AG04450 (cell line): ENCODE measurements at regions of chr19 and their contacts with region 1.

Region 1: DNA sequence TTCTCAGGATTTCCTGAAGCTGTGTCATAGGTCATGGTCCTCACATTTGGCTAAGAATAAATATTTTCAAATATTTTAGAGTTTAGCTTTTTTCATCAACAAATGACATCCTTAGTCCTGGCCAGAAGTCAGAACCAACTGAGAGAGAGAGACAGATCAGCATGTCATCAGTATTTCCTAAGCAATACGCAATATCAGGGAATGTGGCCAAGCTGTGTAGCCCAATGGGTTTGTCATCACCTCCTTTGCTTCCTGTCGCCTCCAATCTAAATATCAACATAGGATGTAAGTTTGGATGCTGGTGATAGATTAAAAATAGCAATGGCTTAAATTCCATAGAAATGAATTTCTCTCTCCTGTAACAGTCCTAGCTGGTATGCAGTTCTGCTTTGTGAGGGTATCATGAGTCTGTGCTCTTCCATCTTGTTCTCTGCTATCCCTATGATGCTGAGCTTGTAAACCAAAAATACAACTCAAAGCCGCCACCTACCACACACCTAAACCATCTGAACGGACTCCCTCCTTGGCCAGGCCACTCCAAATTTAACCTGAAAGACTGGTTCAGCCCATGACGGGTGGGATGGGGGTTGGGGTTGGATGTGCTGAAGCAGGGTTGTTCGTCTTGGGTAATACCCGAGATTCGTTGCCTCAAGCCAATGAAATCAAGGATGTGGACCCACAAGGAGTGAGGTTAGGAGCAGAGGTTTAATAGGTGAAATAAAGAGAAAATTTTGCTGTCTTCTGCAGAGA is 10.0 kb upstream of the IGSF23 start:
- DNase-seq: peak; percentile 93
- H3K4me3 ChIP-seq: no peak overlapping the region
- H3K27ac ChIP-seq: peak overlapping the region; percentile 80
- H3K27me3 ChIP-seq: no peaks in the 10 kb centered on the region
- CTCF ChIP-seq: no peak

Region 2: DNA sequence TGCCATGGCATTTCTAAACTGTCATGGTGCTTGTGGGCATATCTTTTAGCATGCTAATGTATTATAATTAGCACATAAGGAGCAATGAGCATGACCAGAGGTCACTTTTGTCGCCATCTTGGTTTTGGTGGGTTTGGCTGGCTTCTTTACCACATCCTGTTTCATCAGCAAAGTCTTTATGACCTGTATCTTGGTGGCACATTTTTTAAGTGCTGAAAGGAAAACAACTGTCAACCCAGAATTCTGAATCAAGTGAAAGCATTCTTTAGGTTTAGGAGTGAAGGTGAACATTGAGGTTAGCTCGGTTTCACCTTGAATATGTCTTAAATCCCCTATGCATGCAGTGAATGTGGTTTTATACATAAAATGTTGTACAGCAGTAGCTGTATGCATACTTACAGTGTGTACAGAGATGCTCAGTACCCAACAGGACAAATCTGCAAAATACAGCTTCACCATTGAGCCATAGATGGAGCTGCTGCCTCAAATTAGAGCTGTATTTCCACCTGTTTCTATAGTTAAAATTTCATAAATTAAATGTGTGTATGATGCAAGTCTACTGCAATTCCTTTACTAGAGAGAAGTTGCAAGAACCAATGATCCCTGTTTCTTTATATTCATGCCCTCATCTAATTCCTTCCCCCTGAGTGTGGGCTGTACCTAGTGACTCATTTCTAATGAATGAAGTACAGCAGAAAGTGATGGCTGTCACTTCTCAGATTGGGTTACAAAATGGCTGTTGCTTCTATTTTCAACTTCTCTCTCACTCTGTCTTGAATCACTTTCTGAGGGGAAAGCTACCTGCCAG is 15.2 kb before region 1 on chr19:
- CTCF ChIA-PET with region 1: interaction called, 6 read pairs
- POLR2A ChIA-PET with region 1: interaction called, 18 read pairs
- DNase-seq: peak; percentile 86
- H3K4me3 ChIP-seq: no peak overlapping the region
- H3K27ac ChIP-seq: peak overlapping the region; percentile 91
- H3K27me3 ChIP-seq: no peaks in the 10 kb centered on the region
- CTCF ChIP-seq: peak; percentile 60

Region 3: DNA sequence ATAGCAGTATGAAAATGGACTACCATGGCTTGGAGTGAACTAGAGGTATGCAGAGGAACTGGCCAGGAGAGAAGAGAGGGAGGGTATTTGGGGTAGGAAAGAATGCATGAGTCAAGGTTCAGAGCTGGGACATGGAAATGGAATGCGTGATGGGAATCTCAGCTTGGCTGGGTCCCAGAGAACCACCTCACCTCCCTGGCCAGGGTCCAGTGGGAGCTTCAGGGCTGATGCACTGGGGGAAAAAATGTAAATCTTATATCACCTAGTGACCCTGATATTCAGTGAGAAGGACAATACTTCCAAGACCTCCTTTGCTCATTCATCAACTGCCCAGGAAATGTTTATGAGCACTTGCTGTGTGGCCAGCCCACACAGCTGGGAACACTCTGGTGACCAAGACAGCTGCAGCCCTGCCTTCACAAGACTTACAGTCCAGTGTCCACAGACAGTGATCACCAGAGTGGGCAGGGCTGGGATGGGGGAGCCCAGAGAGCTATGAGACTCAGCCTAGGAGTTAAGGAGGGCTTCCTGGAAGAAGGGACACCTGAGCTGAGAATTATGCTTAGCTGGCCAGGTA is 22.8 kb after region 1 on chr19:
- CTCF ChIA-PET with region 1: no interaction called
- POLR2A ChIA-PET with region 1: interaction called, 28 read pairs
- DNase-seq: peak; percentile 97
- H3K4me3 ChIP-seq: no peak overlapping the region
- H3K27ac ChIP-seq: peak overlapping the region; percentile 92
- H3K27me3 ChIP-seq: no peaks in the 10 kb centered on the region
- CTCF ChIP-seq: no peak

Region 4: DNA sequence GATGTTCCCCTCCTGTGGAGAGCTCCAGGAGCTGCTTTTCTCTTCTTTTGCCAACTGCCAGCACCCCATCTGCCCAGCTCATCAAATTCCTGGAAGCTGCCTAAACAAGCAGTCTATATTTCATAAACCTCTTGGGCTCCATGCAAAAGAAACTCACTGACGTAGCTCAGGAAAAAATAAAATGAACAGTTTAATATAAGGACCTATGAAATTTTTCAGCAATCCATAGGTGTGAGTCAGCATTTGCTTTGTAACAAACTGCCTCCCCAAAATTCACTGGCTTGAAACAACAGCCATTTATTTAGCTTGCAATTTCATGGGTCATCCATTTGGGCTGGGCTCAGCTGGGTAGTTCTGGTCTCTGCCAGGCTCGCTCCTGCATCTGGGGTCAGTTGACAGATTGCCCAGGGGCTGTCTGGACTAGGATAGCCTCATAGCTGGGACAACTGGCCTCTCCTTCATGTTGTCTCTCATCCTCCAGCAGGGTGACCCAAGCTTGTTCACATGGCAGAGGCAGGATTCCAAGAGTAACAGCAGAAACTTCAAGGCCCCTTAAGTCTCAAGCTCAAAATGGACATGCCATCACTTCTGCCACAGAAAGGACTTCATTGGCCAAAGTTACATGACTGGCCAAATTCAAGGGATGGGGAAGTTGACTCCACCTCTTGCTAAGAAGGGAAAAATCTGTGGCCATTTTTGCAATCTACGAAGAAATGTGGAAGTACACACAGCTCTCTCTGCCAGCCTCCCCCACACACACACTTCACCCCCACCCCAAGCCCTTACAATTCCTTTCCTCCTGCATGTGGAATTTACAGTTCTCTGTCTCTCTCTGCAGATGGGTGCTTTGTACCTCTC is 32.4 kb after region 1 on chr19:
- CTCF ChIA-PET with region 1: no interaction called
- POLR2A ChIA-PET with region 1: interaction called, 10 read pairs
- DNase-seq: no peak
- H3K4me3 ChIP-seq: no peak overlapping the region
- H3K27ac ChIP-seq: peak overlapping the region; percentile 73
- H3K27me3 ChIP-seq: no peaks in the 10 kb centered on the region
- CTCF ChIP-seq: no peak